IMR-90 (cell line): ENCODE measurements at regions of chr18 and their contacts with region 1.

Region 1: GRCh38 chr18:26383454-26384270 is 157.4 kb downstream of the TAF4B start:
- DNase-seq: peak; percentile 67
- ATAC-seq: peak; percentile 79
- H3K4me3 ChIP-seq: no peak overlapping the region
- H3K27ac ChIP-seq: no peak overlapping the region
- H3K4me1 ChIP-seq: no peaks in the 10 kb centered on the region
- H3K27me3 ChIP-seq: no peaks in the 10 kb centered on the region; the same call in 1 of the 2 replicates
- CTCF ChIP-seq: peak; percentile 69
- POLR2A ChIP-seq: no peak
- RAD21 ChIP-seq: peak; percentile 67

Region 2: GRCh38 chr18:25935356-25935755 is 448.3 kb before region 1 on chr18:
- CTCF ChIA-PET with region 1: no interaction called
- POLR2A ChIA-PET with region 1: no interaction called
- dilution Hi-C with region 1: no loop called
- in situ Hi-C with region 1: no loop called
- intact Hi-C with region 1: loop called (anchors 10 kb)
- DNase-seq: no peak
- ATAC-seq: no peak
- H3K4me3 ChIP-seq: no peak overlapping the region
- H3K27ac ChIP-seq: no peak overlapping the region
- H3K4me1 ChIP-seq: no peaks in the 10 kb centered on the region
- H3K27me3 ChIP-seq: peaks cover 9% of the 10 kb centered on the region
- CTCF ChIP-seq: no peak
- POLR2A ChIP-seq: no peak
- RAD21 ChIP-seq: no peak

Region 3: DNA sequence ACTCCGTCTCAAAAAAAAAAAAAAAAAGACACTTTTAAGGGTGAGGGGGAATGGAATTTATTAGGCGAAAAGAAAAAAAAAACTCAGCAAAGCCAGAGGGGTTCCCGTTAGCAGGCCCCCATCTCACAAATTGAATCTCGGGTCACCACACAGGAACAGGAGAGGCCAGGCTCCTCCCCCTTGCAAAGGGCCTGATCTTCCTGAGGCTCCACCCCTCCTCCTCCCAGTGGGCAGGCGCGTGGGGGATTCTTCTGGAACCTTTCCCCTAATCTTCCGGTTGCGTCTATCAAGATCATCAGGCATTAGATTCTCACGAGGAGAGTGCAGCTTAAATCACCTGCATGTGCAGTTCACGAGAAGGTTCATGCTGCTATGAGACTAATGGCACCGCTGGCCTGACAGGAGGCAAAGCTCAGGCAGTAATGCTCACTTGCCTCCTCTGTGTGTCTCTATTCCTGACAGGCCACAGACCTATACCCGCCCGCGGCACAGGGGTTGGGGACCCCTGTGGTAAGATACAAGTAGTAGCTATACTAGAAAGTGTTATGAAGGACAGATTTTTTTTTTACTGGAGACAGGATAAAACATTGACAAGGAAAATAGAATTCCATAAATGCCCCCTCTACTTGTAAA is 111.6 kb before region 1 on chr18:
- CTCF ChIA-PET with region 1: no interaction called
- POLR2A ChIA-PET with region 1: no interaction called
- dilution Hi-C with region 1: no loop called
- in situ Hi-C with region 1: no loop called
- intact Hi-C with region 1: no loop called
- DNase-seq: no peak
- ATAC-seq: no peak
- H3K4me3 ChIP-seq: no peak overlapping the region
- H3K27ac ChIP-seq: no peak overlapping the region
- H3K4me1 ChIP-seq: no peaks in the 10 kb centered on the region
- H3K27me3 ChIP-seq: no peaks in the 10 kb centered on the region
- CTCF ChIP-seq: no peak
- POLR2A ChIP-seq: no peak
- RAD21 ChIP-seq: no peak

Region 4: DNA sequence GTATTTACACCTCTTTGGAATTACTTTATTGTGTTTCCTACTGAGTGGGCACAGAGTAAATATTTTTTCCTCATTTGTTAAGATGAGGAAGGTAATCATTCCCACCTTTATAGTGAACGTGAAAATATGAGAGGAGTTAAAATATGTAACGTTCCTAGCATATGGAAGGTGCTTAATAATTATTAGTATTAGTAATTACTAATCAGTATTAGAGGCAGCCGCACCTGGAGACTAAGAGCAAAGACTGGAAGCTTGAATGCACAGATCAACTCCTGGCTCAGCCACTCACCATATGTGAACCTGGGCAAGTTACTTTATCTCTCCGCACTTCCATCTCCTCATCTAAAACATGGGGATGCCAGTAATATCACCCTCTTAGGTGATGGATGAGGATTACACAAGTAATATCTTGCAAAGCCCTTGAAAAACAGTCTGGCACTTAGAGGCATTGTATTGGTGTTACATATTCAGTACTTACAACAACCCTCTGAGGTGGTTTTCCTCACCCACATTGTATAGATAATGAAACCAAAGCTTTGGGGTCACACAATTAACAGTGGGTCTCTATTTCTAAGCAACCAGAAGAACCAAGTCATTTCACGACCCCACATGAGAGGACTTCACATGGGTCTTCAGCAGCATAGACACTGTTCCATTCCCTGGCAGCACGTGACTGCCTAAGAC is 265.0 kb after region 1 on chr18:
- CTCF ChIA-PET with region 1: interaction called, 6 read pairs
- POLR2A ChIA-PET with region 1: no interaction called
- dilution Hi-C with region 1: no loop called
- in situ Hi-C with region 1: no loop called
- intact Hi-C with region 1: loop called (anchors 1 kb)
- DNase-seq: no peak
- ATAC-seq: no peak
- H3K4me3 ChIP-seq: no peak overlapping the region
- H3K27ac ChIP-seq: no peak overlapping the region
- H3K4me1 ChIP-seq: no peaks in the 10 kb centered on the region
- H3K27me3 ChIP-seq: peaks cover 9% of the 10 kb centered on the region
- CTCF ChIP-seq: no peak
- POLR2A ChIP-seq: no peak
- RAD21 ChIP-seq: no peak

Region 5: GRCh38 chr18:27005589-27005988 is 621.9 kb after region 1 on chr18:
- CTCF ChIA-PET with region 1: no interaction called
- POLR2A ChIA-PET with region 1: no interaction called
- dilution Hi-C with region 1: no loop called
- in situ Hi-C with region 1: no loop called
- intact Hi-C with region 1: loop called (anchors 10 kb)
- DNase-seq: no peak
- ATAC-seq: no peak
- H3K4me3 ChIP-seq: no peak overlapping the region
- H3K27ac ChIP-seq: no peak overlapping the region
- H3K4me1 ChIP-seq: no peaks in the 10 kb centered on the region
- H3K27me3 ChIP-seq: no peaks in the 10 kb centered on the region
- CTCF ChIP-seq: no peak
- POLR2A ChIP-seq: no peak
- RAD21 ChIP-seq: no peak